ENCODE measurements at regions of chr15 and their contacts with region 1.

Region 1: GRCh38 chr15:60592371-60593169 is 113.6 kb upstream of the ICE2 start:
- DNase-seq: peak; percentile 90
- H3K4me3 Mint-ChIP-seq: peak overlapping the region; percentile 83
- H3K27ac Mint-ChIP-seq: peak overlapping the region; percentile 69
- H3K4me1 Mint-ChIP-seq: peaks cover 53% of the 10 kb centered on the region
- H3K27me3 Mint-ChIP-seq: peaks cover 1% of the 10 kb centered on the region

Region 2: DNA sequence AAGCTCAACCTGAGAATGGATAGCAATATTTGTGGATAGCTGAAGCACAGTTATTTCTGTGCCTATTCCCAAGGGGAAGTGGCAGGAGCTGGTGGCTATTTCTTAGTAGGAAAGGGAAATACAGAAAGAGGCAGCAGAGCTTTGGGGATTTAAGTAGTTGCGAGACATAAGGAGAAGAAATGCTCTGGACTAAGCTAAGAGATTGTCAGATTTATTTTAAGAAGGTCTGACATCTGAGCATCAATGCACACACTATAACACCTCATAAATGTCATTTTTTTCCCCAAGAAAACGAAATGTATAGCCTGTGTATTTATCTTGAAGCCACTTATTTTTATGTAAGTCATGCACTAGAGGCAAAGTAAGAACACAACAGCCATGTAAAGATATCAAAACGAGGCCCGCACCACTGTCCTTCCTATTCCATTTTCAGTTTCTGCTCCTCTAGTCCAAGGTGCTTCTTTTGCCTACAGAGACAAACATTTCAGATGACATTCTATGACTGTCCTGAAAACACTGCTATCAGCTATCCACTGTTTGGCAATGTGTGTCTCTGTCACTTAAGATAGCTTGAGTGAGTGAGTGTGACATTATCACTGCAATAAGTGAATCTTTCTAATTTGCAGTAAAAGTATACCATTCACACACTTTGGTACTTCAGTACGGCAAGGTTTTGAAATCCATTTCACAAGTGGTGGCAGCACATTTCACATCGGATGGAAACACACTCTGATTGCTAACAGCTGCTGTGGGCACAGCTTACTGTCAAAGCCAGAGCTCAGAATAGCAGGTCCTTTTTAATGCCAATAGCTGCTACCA is 50.9 kb before region 1 on chr15:
- CTCF ChIA-PET with region 1: interaction called, 5 read pairs
- POLR2A ChIA-PET with region 1: interaction called, 678 read pairs
- DNase-seq: no peak
- H3K4me3 Mint-ChIP-seq: peak overlapping the region; percentile 43
- H3K27ac Mint-ChIP-seq: peak overlapping the region; percentile 86
- H3K4me1 Mint-ChIP-seq: peaks cover 90% of the 10 kb centered on the region
- H3K27me3 Mint-ChIP-seq: no peaks in the 10 kb centered on the region

Region 3: DNA sequence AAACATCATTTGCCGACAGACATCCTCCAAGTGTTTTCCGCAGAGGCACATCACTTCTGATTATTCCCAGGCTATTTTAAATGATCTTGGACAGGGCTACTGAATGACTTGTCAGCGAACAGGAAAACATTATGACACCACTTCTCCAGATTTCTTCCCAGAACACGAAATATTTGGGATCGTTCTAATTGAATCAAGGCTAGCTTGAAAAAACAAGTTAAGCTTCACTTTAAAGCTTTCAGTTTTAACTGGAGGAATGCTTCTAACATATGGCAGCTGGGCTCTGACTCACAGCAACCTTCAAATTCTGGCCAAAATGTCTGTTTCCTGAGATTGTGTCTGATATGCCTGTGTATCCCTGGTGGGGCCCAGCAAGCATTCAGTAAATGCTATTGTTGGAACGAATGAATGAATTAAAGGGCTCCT is 13.3 kb after region 1 on chr15:
- CTCF ChIA-PET with region 1: interaction called, 12 read pairs
- POLR2A ChIA-PET with region 1: interaction called, 3 read pairs
- DNase-seq: no peak
- H3K4me3 Mint-ChIP-seq: no peak overlapping the region
- H3K27ac Mint-ChIP-seq: no peak overlapping the region
- H3K4me1 Mint-ChIP-seq: peaks cover 20% of the 10 kb centered on the region
- H3K27me3 Mint-ChIP-seq: peaks cover 31% of the 10 kb centered on the region

Region 4: DNA sequence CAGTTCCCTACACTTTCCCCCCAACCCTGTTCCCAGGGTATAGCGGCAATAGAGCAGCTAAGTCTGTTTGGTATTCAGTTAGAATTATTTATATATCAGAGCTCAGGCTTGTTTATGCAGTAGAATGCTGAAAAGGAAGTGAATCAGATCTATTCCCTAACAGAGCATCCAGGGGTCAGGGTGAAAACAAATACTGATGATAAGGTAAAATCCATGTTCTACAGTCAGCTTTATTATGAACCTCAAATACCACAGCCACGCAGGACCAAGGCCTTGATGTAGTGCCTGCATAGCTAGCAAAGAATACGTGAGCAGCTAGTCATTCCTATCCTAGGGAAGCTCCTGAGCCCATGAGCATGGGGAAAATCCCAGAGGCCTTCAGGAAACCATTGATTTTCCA is 116.1 kb after region 1 on chr15:
- CTCF ChIA-PET with region 1: no interaction called
- POLR2A ChIA-PET with region 1: interaction called, 13 read pairs
- DNase-seq: no peak
- H3K4me3 Mint-ChIP-seq: no peak overlapping the region
- H3K27ac Mint-ChIP-seq: no peak overlapping the region
- H3K4me1 Mint-ChIP-seq: peaks cover 29% of the 10 kb centered on the region
- H3K27me3 Mint-ChIP-seq: no peaks in the 10 kb centered on the region

Region 5: GRCh38 chr15:60840306-60840702 is 247.7 kb after region 1 on chr15:
- CTCF ChIA-PET with region 1: interaction called, 7 read pairs
- POLR2A ChIA-PET with region 1: interaction called, 11 read pairs
- DNase-seq: no peak
- H3K4me3 Mint-ChIP-seq: peak overlapping the region; percentile 53
- H3K27ac Mint-ChIP-seq: peak overlapping the region; percentile 84
- H3K4me1 Mint-ChIP-seq: peaks cover 56% of the 10 kb centered on the region
- H3K27me3 Mint-ChIP-seq: peaks cover 63% of the 10 kb centered on the region

Region 6: DNA sequence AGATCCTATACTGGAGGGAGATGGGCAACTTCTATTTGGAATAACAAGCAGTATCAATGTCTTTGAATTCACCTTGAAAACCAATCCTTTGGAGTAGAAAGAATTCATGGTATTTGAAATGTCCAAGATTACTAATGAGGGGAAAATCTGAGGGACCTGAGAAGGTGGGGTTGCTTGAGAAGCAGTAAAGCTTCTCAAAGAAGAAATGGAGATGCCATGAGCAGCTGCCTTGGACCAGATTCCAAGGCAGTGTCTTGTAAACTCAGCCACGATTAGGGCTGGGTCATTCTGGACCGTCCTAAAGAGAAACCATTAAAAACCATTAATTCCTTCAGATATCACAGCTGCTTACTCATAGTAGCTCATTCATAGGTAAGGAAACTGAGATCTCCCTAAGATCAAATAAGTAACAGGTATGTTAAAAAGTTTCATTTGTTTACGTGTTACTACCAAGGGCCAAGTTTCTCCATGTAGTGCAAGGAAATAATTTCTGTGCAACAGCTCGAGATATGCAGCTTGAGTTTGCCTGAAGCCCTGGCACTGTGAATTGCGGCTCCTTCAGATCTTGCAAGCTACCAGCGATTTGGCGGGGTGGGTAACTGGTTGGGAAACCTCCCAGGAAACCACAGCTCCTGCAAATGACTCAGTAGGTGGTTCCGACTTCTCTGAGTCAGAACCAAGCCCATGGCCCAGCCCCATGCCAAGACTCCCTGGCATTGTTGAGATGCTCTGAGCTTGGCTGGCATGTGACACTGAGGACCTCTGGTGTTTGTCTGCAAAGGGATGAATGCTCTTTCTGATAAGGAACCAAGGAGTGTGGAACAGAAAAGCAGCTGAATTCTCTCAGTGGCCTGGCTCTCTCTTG is 339.7 kb after region 1 on chr15:
- CTCF ChIA-PET with region 1: interaction called, 58 read pairs
- POLR2A ChIA-PET with region 1: interaction called, 12 read pairs
- DNase-seq: peak; percentile 74
- H3K4me3 Mint-ChIP-seq: no peak overlapping the region
- H3K27ac Mint-ChIP-seq: no peak overlapping the region
- H3K4me1 Mint-ChIP-seq: peaks cover 26% of the 10 kb centered on the region
- H3K27me3 Mint-ChIP-seq: peaks cover 53% of the 10 kb centered on the region

Measured in activated CD4-positive, alpha-beta memory T cell treated with anti-CD3 and anti-CD28 coated beads, Interleukin-2, amount 10 ng/mL, durations not matched to agents 7 days and 5 days (primary cell).